Heart left ventricle (tissue), 16 donors: ENCODE measurements at regions of chr6 and their contacts with region 1.

Region 1: DNA sequence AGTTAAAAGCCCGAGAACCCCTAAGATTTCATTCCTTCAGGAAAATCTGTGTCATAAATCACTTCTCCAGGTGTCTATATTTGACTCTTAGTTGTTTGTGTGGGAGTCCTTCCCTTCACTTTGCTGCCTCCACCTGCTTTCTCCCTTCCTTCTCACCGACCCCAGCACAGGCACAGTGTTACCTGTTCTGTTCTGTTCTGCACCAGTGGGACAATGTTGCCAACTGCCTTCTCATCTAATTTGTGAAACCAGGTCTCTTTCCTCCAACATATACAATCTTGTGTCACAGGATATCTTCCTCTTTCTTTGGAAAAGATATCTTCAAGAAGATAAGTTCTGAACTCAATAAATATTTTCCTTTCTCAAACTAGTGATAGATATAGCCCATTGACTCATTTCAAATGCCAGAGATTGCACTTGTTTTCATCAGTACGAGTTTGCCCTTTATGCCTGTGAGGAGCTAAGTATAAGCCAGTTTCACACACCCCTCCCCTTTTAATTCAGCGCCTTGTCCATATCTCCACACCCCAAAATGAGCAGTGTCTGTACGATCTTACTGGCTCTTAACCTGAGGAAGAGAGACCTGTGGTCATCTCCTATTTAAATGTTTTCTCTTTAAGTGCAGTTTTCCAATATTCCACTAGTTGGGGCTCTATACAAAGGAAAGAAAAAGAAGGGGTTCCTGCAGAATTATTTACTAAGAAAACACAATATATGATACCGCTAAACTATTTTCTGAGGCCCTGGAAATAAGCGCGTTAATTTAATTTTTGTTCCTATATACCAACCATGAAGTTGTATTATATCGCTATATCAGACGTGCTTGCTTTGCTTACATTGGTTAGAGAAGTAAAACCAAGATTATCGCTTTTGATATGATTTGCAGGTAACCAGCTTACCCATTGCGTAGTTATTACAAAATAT is 81.6 kb upstream of the PREP start:
- DNase-seq: no peak
- ATAC-seq: peak; percentile 38 to 51 (median 48)
- H3K4me3 ChIP-seq: peak overlapping the region in 5 of 12 donors; percentile 2 to 30 (median 18)
- H3K27ac ChIP-seq: peak overlapping the region in 1 of 12 donors; percentile 6
- H3K4me1 ChIP-seq: peaks cover 0 to 57% (median 13%) of the 10 kb centered on the region in 12 donors
- H3K27me3 ChIP-seq: no peaks in the 10 kb centered on the region
- CTCF ChIP-seq: peak; percentile 83 to 97 (median 93)
- POLR2A ChIP-seq: no peak

Region 2: GRCh38 chr6:105608711-105609374 is 124.3 kb after region 1 on chr6:
- intact Hi-C with region 1: loop called in 2 of 10 experiments (anchors 5 kb)
- DNase-seq: no peak
- ATAC-seq: no peak
- H3K4me3 ChIP-seq: no peak overlapping the region
- H3K27ac ChIP-seq: peak overlapping the region in 6 of 12 donors; percentile 0 to 48 (median 24)
- H3K4me1 ChIP-seq: peaks cover 0 to 22% (median 12%) of the 10 kb centered on the region in 12 donors
- H3K27me3 ChIP-seq: no peaks in the 10 kb centered on the region
- CTCF ChIP-seq: no peak
- POLR2A ChIP-seq: no peak

Region 3: DNA sequence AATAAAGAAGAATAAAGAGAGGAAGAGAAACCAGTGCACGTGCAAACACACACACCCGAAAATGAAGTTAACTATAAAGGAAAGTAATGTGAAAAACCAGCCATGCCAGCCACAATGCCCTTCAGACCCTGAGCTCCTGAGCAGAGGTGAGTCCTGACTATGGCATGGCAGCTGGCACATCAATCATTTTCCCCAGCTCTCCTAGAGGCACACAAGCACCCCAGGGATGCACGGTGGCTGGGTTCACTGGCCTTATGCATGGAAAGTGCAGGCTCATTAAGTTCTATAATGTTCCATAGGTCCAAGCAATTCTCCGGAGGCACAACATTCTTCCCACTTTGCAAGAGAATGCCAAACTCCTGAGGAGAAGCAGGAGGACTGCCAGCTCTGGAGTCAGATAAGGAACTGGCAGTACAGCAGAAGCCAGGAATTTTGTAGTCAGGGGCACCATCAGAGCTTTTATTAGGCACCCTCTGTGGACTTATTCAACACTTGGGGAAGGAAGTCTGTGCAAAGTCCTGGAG is 426.7 kb after region 1 on chr6:
- intact Hi-C with region 1: loop called in 1 of 10 experiments (anchors 10 kb)
- DNase-seq: peak in 1 of 5 donors; percentile 32
- ATAC-seq: peak; percentile 68 to 81 (median 76)
- H3K4me3 ChIP-seq: no peak overlapping the region
- H3K27ac ChIP-seq: peak overlapping the region in 1 of 12 donors; percentile 2
- H3K4me1 ChIP-seq: peaks cover 0 to 45% (median 3%) of the 10 kb centered on the region in 12 donors
- H3K27me3 ChIP-seq: no peaks in the 10 kb centered on the region
- CTCF ChIP-seq: no peak
- POLR2A ChIP-seq: no peak

Region 4: DNA sequence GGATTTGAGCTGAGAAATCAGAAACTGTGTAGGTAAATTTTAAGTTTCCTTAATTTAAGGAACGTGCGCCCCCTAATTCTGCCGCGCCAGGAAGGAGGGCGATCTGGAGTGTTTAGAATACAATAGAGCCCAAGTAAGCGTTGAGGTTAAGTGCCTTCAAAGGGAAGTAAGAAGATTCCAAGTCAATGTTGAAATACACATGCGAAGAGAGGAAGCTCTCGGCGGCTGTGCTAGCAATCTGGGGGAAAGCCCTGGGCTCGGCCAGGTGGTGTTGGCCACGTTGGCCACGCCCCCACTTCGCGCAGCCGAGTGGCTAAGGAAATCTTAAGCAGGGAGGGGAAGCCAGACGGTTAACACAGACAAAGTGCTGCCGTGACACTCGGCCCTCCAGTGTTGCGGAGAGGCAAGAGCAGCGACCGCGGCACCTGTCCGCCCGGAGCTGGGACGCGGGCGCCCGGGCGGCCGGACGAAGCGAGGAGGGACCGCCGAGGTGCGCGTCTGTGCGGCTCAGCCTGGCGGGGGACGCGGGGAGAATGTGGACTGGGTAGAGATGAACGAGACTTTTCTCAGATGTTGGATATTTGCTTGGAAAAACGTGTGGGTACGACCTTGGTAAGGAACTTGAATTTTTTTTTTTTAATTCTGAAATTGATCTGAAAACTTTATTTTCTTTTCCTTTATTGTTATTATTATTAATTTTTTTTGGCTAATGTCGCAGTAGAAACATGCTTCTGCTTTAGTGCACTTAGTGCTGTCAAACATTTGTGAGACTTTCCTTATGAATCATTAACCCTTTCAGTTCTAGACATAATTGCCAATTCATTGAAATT is 601.7 kb after region 1 on chr6 and contains the start of gene PRDM1:
- intact Hi-C with region 1: loop called in 7 of 10 experiments (anchors 5 to 10 kb)
- DNase-seq: peak; percentile 66 to 89 (median 81)
- ATAC-seq: peak; percentile 49 to 82 (median 76)
- H3K4me3 ChIP-seq: peak within 1 kb of the TSS; percentile 12 to 66 (median 52)
- H3K27ac ChIP-seq: peak within 1 kb of the TSS; percentile 8 to 87 (median 58)
- H3K4me1 ChIP-seq: peaks cover 0 to 76% (median 7%) of the 10 kb centered on the region in 12 donors
- H3K27me3 ChIP-seq: peaks cover 0 to 62% (median 12%) of the 10 kb centered on the region in 9 donors
- CTCF ChIP-seq: peak in 6 of 12 donors; percentile 3 to 20 (median 14)
- POLR2A ChIP-seq: peak in 1 of 2 donors; percentile 38
- total RNA-seq, gene PRDM1: 1.0 to 10.8 (median 1.7) TPM

Region 5: GRCh38 chr6:106300944-106301343 is 816.4 kb after region 1 on chr6:
- intact Hi-C with region 1: loop called in 9 of 10 experiments (anchors 2 to 10 kb)
- DNase-seq: no peak
- ATAC-seq: no peak
- H3K4me3 ChIP-seq: no peak overlapping the region
- H3K27ac ChIP-seq: no peak overlapping the region
- H3K4me1 ChIP-seq: peaks cover 0 to 5% (median 0%) of the 10 kb centered on the region in 12 donors
- H3K27me3 ChIP-seq: no peaks in the 10 kb centered on the region
- CTCF ChIP-seq: peak in 11 of 12 donors; percentile 24 to 67 (median 51)
- POLR2A ChIP-seq: no peak